ENCODE measurements at regions of chr6 and their contacts with region 1.

Region 1: DNA sequence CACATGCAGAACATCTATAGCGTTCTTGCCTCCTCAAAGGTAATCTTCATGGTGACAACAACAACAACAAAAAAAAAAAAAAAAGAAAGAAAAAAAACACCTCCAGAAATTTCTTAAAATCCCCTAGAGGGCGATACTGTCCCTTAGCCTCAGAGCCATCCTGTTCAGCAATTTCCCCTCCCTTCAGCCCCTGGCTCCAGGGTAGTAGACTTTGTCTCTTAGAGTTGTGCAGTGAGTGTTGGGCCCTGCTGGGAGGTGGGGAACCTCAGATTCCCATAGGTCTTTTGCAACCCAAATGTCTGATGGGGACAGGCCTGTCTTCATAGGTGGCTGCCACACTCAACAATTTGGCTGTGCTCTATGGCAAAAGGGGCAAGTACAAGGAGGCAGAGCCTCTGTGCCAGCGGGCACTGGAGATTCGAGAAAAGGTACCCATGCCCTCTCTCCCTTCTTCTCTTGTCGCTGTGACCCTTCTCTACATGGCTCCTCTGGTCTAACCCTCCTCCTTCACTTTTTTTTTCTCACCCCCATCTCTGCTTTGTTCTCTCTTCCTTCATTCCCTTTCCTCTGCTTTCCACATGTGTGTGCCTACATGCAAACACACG is 6.0 kb upstream of the PTK7 start:
- DNase-seq: no peak
- H3K4me3 ChIP-seq: no peak overlapping the region
- H3K27ac ChIP-seq: peak overlapping the region in 1 of 59 donors; percentile 1
- H3K27me3 ChIP-seq: no peaks in the 10 kb centered on the region
- CTCF ChIP-seq: peak in 54 of 56 donors; percentile 14 to 64 (median 47)

Region 2: GRCh38 chr6:42911171-42912021 is 158.7 kb before region 1 on chr6:
- intact Hi-C with region 1: loop called in 1 of 2 experiments (anchors 5 kb)
- DNase-seq: peak in 1 of 10 donors; percentile 7
- H3K4me3 ChIP-seq: peak overlapping the region in 54 of 59 donors; percentile 7 to 62 (median 43)
- H3K27ac ChIP-seq: no peak overlapping the region
- H3K27me3 ChIP-seq: peaks cover 0 to 20% (median 0%) of the 10 kb centered on the region in 45 donors
- CTCF ChIP-seq: no peak

Region 3: GRCh38 chr6:43143235-43144124 is 73.3 kb after region 1 on chr6:
- intact Hi-C with region 1: loop called in 1 of 2 experiments (anchors 5 kb)
- DNase-seq: peak; percentile 73 to 94 (median 84)
- H3K4me3 ChIP-seq: peak overlapping the region in 32 of 59 donors; percentile 0 to 49 (median 24)
- H3K27ac ChIP-seq: peak overlapping the region in 46 of 59 donors; percentile 2 to 79 (median 50)
- H3K27me3 ChIP-seq: no peaks in the 10 kb centered on the region
- CTCF ChIP-seq: peak; percentile 68 to 96 (median 92)